ENCODE measurements at regions of chr6 and their contacts with region 1.

Region 1: DNA sequence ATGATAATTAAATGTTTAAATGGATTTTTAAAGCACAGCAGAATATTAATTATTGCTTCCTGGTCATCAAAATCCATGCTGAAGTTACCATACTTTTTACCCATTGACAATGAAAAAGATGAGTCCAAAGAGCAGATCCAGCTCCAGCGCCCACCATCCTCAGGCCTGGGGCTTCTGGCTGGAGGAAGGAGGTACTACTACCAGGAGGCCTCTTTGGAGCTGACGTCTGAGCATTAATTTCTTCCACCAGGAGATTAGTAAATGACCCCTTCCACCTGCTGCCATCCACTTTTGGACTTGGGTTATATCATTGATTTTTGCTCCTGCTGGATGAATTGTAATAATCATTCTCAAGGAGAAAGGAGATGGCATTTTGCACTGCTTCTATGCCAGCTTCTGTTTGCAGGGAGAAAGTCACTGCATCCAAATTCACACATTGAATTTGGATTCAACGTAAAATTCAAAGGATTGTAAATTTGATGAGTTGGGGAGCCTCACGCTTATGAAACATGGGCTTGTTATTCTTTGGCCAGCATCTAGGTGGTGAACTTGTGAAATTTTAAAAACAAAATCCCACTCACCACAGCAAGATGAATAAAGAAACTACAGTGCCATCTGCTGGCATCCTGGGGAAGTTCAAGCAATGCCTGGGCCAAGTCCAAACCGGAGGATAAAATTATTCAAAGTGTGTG is 121.8 kb downstream of the SASH1 start:
- DNase-seq: peak; percentile 65
- CTCF ChIP-seq: peak; percentile 63

Region 2: DNA sequence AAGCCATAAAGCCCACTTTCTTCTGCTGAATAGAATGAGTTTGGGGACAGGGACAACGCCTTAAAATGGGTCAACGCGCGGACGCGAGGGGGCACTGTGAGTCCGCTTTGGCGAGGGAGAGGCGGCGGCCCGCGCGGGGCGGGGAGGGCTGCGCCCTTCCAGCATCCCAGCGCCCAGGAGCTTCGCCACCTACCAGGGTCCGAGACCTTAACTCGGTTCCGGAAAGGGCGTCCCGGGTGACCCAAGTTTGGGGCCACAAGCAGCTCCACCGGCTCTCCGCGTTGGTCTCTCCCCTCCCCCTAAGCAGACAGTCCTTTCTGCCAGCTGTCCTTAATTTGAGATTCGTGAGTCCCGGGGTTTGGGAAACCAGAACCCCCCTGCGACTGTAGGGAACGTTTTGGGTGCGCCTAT is 957.8 kb before region 1 on chr6:
- in situ Hi-C with region 1: loop called (anchors 25 kb)
- DNase-seq: peak; percentile 75
- CTCF ChIP-seq: peak; percentile 48

Region 3: GRCh38 chr6:148177589-148178233 is 286.8 kb before region 1 on chr6:
- in situ Hi-C with region 1: loop called (anchors 25 kb)
- DNase-seq: peak; percentile 47
- CTCF ChIP-seq: peak; percentile 43

Measured in GM13976 (cell line).